CD4-positive, alpha-beta T cell (primary cell): ENCODE measurements at regions of chr12 and their contacts with region 1.

Region 1: DNA sequence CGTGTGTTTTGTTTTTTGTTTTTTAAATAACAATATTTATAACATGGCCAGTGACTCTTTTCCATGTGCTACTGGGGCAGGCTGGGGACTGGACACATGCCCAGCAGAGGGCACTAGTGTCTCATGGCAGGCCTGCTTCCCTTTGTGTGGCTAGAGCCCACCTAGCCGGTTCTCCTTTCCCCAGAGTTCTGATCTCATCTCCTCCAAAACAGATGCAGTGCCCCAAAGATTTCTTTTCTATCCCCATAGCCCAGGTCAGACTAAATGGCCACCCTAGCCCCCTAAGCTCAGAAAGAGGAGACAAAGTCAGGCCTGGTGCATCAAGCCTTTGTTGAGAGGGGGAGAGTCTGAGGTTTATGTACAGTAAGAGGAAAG is 21.2 kb downstream of the PRPF40B start:
- DNase-seq: peak; percentile 73 to 92 (median 80)
- ATAC-seq: peak; percentile 95
- H3K4me3 ChIP-seq: no peak overlapping the region
- H3K4me3 Mint-ChIP-seq: peak overlapping the region; percentile 2
- H3K27ac ChIP-seq: peak overlapping the region; percentile 17 to 18
- H3K27ac Mint-ChIP-seq: peak overlapping the region; percentile 78
- H3K4me1 ChIP-seq: peaks cover 31% of the 10 kb centered on the region
- H3K4me1 Mint-ChIP-seq: peaks cover 36% of the 10 kb centered on the region
- H3K27me3 ChIP-seq: no peaks in the 10 kb centered on the region
- H3K27me3 Mint-ChIP-seq: no peaks in the 10 kb centered on the region
- CTCF ChIP-seq: peak; percentile 98

Region 2: GRCh38 chr12:47870175-47870781 is 1774.3 kb before region 1 on chr12:
- CTCF ChIA-PET with region 1: no interaction called
- POLR2A ChIA-PET with region 1: no interaction called
- intact Hi-C with region 1: no loop called
- DNase-seq: peak in 3 of 14 experiments; percentile 24 to 42 (median 31)
- ATAC-seq: no peak
- H3K4me3 ChIP-seq: no peak overlapping the region
- H3K4me3 Mint-ChIP-seq: no peak overlapping the region
- H3K27ac ChIP-seq: no peak overlapping the region
- H3K27ac Mint-ChIP-seq: no peak overlapping the region
- H3K4me1 ChIP-seq: no peaks in the 10 kb centered on the region
- H3K4me1 Mint-ChIP-seq: no peaks in the 10 kb centered on the region
- H3K27me3 ChIP-seq: no peaks in the 10 kb centered on the region
- H3K27me3 Mint-ChIP-seq: no peaks in the 10 kb centered on the region
- CTCF ChIP-seq: peak; percentile 14

Region 3: DNA sequence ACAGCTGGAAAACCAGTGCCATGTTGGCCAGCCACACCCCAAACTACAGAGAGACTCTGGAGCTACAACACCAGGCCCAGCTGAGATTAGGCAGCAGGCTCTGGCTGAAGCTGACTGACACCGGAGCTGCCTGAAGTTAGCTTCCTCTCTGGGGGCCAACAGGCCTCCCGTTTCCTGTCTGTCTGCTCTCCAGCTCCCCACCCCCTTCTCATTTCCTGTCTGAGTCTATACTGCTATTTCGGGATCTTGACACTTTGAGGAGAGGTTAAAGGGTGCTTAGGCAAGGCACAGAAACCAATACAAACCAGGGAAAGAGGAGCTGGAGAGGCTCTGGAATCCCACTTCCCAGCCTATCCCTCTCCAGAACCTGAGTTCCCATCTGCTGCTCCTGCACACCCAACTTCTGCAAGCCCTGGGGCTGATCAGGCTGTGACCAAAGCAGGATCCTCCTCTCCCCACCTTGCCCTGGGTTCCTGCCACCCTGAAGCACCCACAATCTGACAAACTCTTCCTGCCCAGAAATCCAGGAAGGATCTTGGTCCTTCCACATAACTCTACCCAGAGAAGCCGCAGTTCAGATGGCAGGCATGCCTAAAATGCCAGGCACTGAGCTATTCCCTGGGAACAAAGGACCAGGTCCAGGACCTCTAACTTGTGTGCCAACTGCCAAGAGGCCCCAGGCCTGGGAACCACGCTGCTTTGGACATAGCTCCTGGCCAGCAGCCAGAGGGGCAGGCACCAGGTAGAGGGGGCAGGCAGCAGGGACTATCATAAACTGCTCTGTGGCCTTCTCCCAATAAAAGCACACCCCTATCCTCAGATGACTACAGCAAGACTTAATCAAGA is 18.6 kb after region 1 on chr12:
- CTCF ChIA-PET with region 1: interaction called, 5 read pairs
- POLR2A ChIA-PET with region 1: interaction called, 36 read pairs
- intact Hi-C with region 1: loop called (anchors 2 kb)
- DNase-seq: peak; percentile 53 to 91 (median 74)
- ATAC-seq: peak; percentile 97
- H3K4me3 ChIP-seq: peak overlapping the region; percentile 10
- H3K4me3 Mint-ChIP-seq: peak overlapping the region; percentile 90
- H3K27ac ChIP-seq: peak overlapping the region; percentile 88 to 97
- H3K27ac Mint-ChIP-seq: peak overlapping the region; percentile 97
- H3K4me1 ChIP-seq: peaks cover 65% of the 10 kb centered on the region
- H3K4me1 Mint-ChIP-seq: peaks cover 83% of the 10 kb centered on the region
- H3K27me3 ChIP-seq: no peaks in the 10 kb centered on the region
- H3K27me3 Mint-ChIP-seq: no peaks in the 10 kb centered on the region
- CTCF ChIP-seq: no peak

Region 4: GRCh38 chr12:49673446-49674317 is 29.1 kb after region 1 on chr12:
- CTCF ChIA-PET with region 1: interaction called, 3 read pairs
- POLR2A ChIA-PET with region 1: interaction called, 6 read pairs
- intact Hi-C with region 1: loop called (anchors 1 to 2 kb)
- DNase-seq: peak in 6 of 14 experiments; percentile 21 to 55 (median 32)
- ATAC-seq: peak; percentile 7
- H3K4me3 ChIP-seq: no peak overlapping the region
- H3K4me3 Mint-ChIP-seq: peak overlapping the region; percentile 72
- H3K27ac ChIP-seq: peak overlapping the region; percentile 89 to 93
- H3K27ac Mint-ChIP-seq: peak overlapping the region; percentile 97
- H3K4me1 ChIP-seq: peaks cover 71% of the 10 kb centered on the region
- H3K4me1 Mint-ChIP-seq: peaks cover 91% of the 10 kb centered on the region
- H3K27me3 ChIP-seq: no peaks in the 10 kb centered on the region
- H3K27me3 Mint-ChIP-seq: no peaks in the 10 kb centered on the region
- CTCF ChIP-seq: no peak

Region 5: GRCh38 chr12:49776413-49776812 is 131.8 kb after region 1 on chr12:
- CTCF ChIA-PET with region 1: interaction called, 3 read pairs
- POLR2A ChIA-PET with region 1: no interaction called
- intact Hi-C with region 1: loop called in 1 of 2 experiments (anchors 2 kb)
- DNase-seq: peak in 13 of 14 experiments; percentile 14 to 77 (median 37)
- ATAC-seq: peak; percentile 73
- H3K4me3 ChIP-seq: no peak overlapping the region
- H3K4me3 Mint-ChIP-seq: no peak overlapping the region
- H3K27ac ChIP-seq: no peak overlapping the region
- H3K27ac Mint-ChIP-seq: no peak overlapping the region
- H3K4me1 ChIP-seq: peaks cover 13% of the 10 kb centered on the region
- H3K4me1 Mint-ChIP-seq: peaks cover 10% of the 10 kb centered on the region
- H3K27me3 ChIP-seq: peaks cover 0 to 3% of the 10 kb centered on the region in 2 experiments
- H3K27me3 Mint-ChIP-seq: peaks cover 25% of the 10 kb centered on the region
- CTCF ChIP-seq: peak; percentile 52